ENCODE measurements at regions of chr2 and their contacts with region 1.

Region 1: GRCh38 chr2:11738589-11739436 is 7.6 kb upstream of the LPIN1 start:
- DNase-seq: peak; percentile 75
- ATAC-seq: peak; percentile 94
- H3K4me3 ChIP-seq: peak overlapping the region; percentile 4 to 36 (median 6); a peak in 3 of 6 replicates
- H3K27ac ChIP-seq: no peak overlapping the region
- H3K4me1 ChIP-seq: peaks cover 50% of the 10 kb centered on the region
- H3K27me3 ChIP-seq: peaks cover 0 to 5% of the 10 kb centered on the region in 2 experiments; a peak in 2 of 5 replicates
- CTCF ChIP-seq: peak; percentile 92
- EP300 ChIP-seq: no peak
- POLR2A ChIP-seq: no peak
- RAD21 ChIP-seq: peak; percentile 79

Region 2: DNA sequence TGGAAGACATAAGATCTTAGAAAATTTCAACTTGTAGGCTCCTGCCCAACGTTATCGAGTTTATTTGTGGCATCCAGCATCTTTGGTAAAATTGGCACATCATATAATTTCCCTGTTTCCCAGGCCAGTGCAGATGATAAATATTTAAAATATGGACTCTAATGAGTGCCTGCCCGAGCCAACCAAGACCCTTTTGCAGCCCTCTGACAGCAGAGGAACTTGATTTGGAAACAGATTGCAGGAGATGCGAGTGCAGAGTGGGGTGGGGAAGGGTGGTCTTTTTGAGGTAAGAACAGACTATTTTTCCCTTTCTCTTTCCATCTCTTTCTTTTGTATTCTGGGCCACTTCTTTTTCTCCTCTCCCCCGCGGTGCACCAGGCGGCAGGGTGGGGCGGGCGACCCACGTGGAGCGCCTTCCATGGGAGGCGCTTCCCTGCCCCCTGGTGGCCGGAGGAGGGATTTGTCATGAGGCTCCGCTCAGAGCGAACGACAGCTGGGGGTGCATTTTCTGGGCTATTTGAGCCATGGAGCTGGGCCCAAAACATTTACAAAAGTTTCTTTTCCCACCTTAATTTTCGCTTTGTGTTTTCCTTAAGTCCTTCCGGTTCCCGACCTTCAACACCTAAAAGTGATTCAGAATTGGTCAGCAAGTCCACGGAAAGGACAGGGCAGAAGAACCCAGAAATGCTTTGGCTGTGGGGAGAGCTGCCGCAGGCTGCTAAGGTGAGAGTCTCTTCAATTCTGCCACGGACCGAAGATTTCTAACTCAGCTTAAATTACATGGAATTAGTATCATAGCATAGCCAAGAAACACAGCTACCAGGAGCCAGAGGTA is 40.3 kb after region 1 on chr2:
- CTCF ChIA-PET with region 1: interaction called, 31 read pairs
- POLR2A ChIA-PET with region 1: interaction called, 3 read pairs
- in situ Hi-C with region 1: loop called (anchors 5 kb)
- intact Hi-C with region 1: loop called (anchors 1 kb)
- DNase-seq: peak; percentile 62
- ATAC-seq: peak; percentile 100
- H3K4me3 ChIP-seq: 0 out of 6 replicates have a peak overlapping the region, but pooled peaks of 1 of the 3 experiments have one; percentile 8
- H3K27ac ChIP-seq: no peak overlapping the region
- H3K4me1 ChIP-seq: peaks cover 9% of the 10 kb centered on the region; the same call in 1 of the 2 replicates
- H3K27me3 ChIP-seq: no peaks in the 10 kb centered on the region
- CTCF ChIP-seq: peak; percentile 96
- EP300 ChIP-seq: no peak
- POLR2A ChIP-seq: no peak
- RAD21 ChIP-seq: peak; percentile 95

Region 3: DNA sequence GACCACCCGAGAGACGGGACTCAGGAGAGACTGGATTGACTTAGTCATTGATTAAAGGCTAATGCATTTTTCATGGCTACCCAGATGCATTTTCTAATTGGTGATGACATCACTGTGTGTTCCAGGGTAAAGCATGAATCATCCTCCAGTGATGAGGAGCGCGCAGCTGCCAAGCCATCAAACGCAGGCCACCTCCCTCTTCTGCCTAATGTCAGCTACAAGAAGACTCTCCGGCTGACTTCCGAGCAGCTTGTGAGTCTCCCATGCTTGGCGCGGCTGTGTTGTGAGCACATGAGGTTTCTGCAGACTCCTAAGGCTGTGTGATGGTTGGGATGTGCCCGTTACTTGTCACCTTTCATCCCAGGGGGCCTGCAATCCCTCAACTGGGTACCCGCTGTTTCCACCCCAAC is 64.0 kb after region 1 on chr2:
- CTCF ChIA-PET with region 1: no interaction called
- POLR2A ChIA-PET with region 1: no interaction called
- in situ Hi-C with region 1: no loop called
- intact Hi-C with region 1: no loop called
- DNase-seq: no peak
- ATAC-seq: no peak
- H3K4me3 ChIP-seq: no peak overlapping the region
- H3K27ac ChIP-seq: no peak overlapping the region
- H3K4me1 ChIP-seq: no peaks in the 10 kb centered on the region
- H3K27me3 ChIP-seq: no peaks in the 10 kb centered on the region
- CTCF ChIP-seq: no peak
- EP300 ChIP-seq: no peak
- POLR2A ChIP-seq: no peak
- RAD21 ChIP-seq: no peak

Region 4: GRCh38 chr2:12027136-12027535 is 288.3 kb after region 1 on chr2:
- CTCF ChIA-PET with region 1: no interaction called
- POLR2A ChIA-PET with region 1: no interaction called
- in situ Hi-C with region 1: no loop called
- intact Hi-C with region 1: no loop called
- DNase-seq: no peak
- ATAC-seq: no peak
- H3K4me3 ChIP-seq: no peak overlapping the region
- H3K27ac ChIP-seq: no peak overlapping the region
- H3K4me1 ChIP-seq: no peaks in the 10 kb centered on the region
- H3K27me3 ChIP-seq: no peaks in the 10 kb centered on the region
- CTCF ChIP-seq: no peak
- EP300 ChIP-seq: no peak
- POLR2A ChIP-seq: no peak
- RAD21 ChIP-seq: no peak

Measured in HepG2 (cell line).